Transverse colon (tissue), 4 donors: ENCODE measurements at regions of chr19 and their contacts with region 1.

Region 1: GRCh38 chr19:50422397-50423294 is 3.9 kb downstream of the SPIB start:
- DNase-seq: no peak
- H3K4me3 ChIP-seq: no peak overlapping the region
- H3K27ac ChIP-seq: no peak overlapping the region
- H3K4me1 ChIP-seq: peaks cover 0 to 11% (median 9%) of the 10 kb centered on the region in 4 donors
- H3K27me3 ChIP-seq: peaks cover 52% of the 10 kb centered on the region
- CTCF ChIP-seq: no peak
- EP300 ChIP-seq: no peak
- POLR2A ChIP-seq: no peak

Region 2: GRCh38 chr19:50402544-50403301 is 19.9 kb before region 1 on chr19:
- in situ Hi-C with region 1: no loop called
- intact Hi-C with region 1: loop called (anchors 1 kb)
- DNase-seq: no peak
- H3K4me3 ChIP-seq: no peak overlapping the region
- H3K27ac ChIP-seq: no peak overlapping the region
- H3K4me1 ChIP-seq: no peaks in the 10 kb centered on the region
- H3K27me3 ChIP-seq: no peaks in the 10 kb centered on the region
- CTCF ChIP-seq: no peak
- EP300 ChIP-seq: no peak
- POLR2A ChIP-seq: no peak

Region 3: GRCh38 chr19:51916167-51916566 is 1493.5 kb after region 1 on chr19:
- in situ Hi-C with region 1: no loop called
- intact Hi-C with region 1: no loop called
- DNase-seq: no peak
- H3K4me3 ChIP-seq: no peak overlapping the region
- H3K27ac ChIP-seq: no peak overlapping the region
- H3K4me1 ChIP-seq: no peaks in the 10 kb centered on the region
- H3K27me3 ChIP-seq: no peaks in the 10 kb centered on the region
- CTCF ChIP-seq: no peak
- EP300 ChIP-seq: no peak
- POLR2A ChIP-seq: no peak